Activated CD8-positive, alpha-beta T cell treated with anti-CD3 and anti-CD28 coated beads for 36 hours (primary cell): ENCODE measurements at regions of chr11 and their contacts with region 1.

Region 1: GRCh38 chr11:19723572-19724342 is 11.1 kb downstream of the NAV2 start:
- DNase-seq: peak; percentile 71
- ATAC-seq: peak; percentile 93
- H3K4me3 Mint-ChIP-seq: no peak overlapping the region
- H3K27ac Mint-ChIP-seq: peak overlapping the region; percentile 62
- H3K4me1 Mint-ChIP-seq: peaks cover 23% of the 10 kb centered on the region
- H3K27me3 Mint-ChIP-seq: no peaks in the 10 kb centered on the region
- CTCF ChIP-seq: no peak

Region 2: GRCh38 chr11:19742588-19743292 is 19.0 kb after region 1 on chr11:
- CTCF ChIA-PET with region 1: interaction called, 16 read pairs
- POLR2A ChIA-PET with region 1: no interaction called
- intact Hi-C with region 1: no loop called
- DNase-seq: peak; percentile 77
- ATAC-seq: peak; percentile 84
- H3K4me3 Mint-ChIP-seq: no peak overlapping the region
- H3K27ac Mint-ChIP-seq: no peak overlapping the region
- H3K4me1 Mint-ChIP-seq: no peaks in the 10 kb centered on the region
- H3K27me3 Mint-ChIP-seq: peaks cover 6% of the 10 kb centered on the region
- CTCF ChIP-seq: peak; percentile 72